Ascending aorta (tissue), 2 donors: ENCODE measurements at regions of chr9 and their contacts with region 1.

Region 1: GRCh38 chr9:30846651-30847050 is 1537.8 kb upstream of the ACO1 start:
- DNase-seq: no peak
- H3K4me3 ChIP-seq: no peak overlapping the region
- H3K27ac ChIP-seq: no peak overlapping the region
- H3K4me1 ChIP-seq: no peaks in the 10 kb centered on the region
- H3K27me3 ChIP-seq: no peaks in the 10 kb centered on the region
- CTCF ChIP-seq: no peak

Region 2: DNA sequence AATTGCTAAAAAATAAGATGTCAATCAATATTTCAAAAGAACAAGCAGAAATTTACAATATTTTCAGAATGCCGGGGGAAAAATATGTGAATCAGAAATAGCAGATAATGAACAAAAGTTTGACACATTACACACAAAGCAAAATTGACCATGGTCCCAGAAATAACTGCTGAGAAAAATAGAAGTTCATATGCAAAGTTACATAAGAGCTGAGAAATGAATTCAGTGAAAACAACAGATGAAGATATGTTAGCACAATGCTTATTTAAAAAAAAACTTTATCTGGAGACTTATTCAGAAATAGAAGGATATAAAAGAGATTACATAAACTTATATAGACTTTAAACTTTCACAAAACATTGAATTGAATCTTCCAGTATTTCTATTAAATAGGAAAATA is 54.1 kb after region 1 on chr9:
- intact Hi-C with region 1: loop called (anchors 10 kb)
- DNase-seq: no peak
- H3K4me3 ChIP-seq: no peak overlapping the region
- H3K27ac ChIP-seq: no peak overlapping the region
- H3K4me1 ChIP-seq: no peaks in the 10 kb centered on the region
- H3K27me3 ChIP-seq: no peaks in the 10 kb centered on the region
- CTCF ChIP-seq: no peak

Region 3: DNA sequence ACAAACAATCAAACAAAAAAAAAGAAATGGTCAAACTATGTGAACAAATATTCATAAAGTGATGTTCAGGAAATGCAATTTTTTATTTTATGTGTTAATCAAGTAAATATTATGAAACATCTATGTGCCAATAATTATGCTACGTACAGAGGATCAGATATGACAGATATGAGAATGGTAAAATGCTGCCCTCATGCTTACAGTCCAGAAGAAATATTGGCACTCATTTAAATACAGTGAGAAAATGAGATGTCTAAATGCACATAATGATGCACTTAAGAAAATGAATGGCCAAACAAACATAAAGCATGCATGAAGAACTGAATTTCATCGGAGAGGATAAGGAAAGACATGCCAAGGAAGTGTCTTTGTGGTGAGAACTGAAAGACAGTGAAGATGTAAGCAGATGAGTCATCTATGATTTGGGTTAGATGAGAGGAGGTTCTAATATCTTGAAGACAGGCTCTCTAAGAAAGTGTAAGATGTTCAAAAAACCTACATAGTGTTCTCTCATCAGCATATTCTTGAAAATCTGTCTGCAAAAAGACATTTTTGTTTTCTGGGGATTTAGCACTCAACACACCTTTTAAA is 306.7 kb after region 1 on chr9:
- intact Hi-C with region 1: no loop called
- DNase-seq: no peak
- H3K4me3 ChIP-seq: no peak overlapping the region
- H3K27ac ChIP-seq: no peak overlapping the region
- H3K4me1 ChIP-seq: no peaks in the 10 kb centered on the region
- H3K27me3 ChIP-seq: no peaks in the 10 kb centered on the region
- CTCF ChIP-seq: no peak